ENCODE measurements at regions of chr17 and their contacts with region 1.

Region 1: GRCh38 chr17:16380640-16381495 is at the start of gene UBB:
- DNase-seq: peak; percentile 97
- ATAC-seq: peak; percentile 95
- H3K4me3 Mint-ChIP-seq: peak within 1 kb of the TSS; percentile 94
- H3K27ac Mint-ChIP-seq: peak within 1 kb of the TSS; percentile 95
- H3K4me1 Mint-ChIP-seq: peaks cover 33% of the 10 kb centered on the region
- H3K27me3 Mint-ChIP-seq: no peaks in the 10 kb centered on the region
- CTCF ChIP-seq: no peak
- total RNA-seq, gene UBB: 1,334 to 1,337 TPM

Region 2: GRCh38 chr17:16135461-16135860 is 245.4 kb before region 1 on chr17:
- CTCF ChIA-PET with region 1: no interaction called
- POLR2A ChIA-PET with region 1: no interaction called
- intact Hi-C with region 1: no loop called
- DNase-seq: no peak
- ATAC-seq: no peak
- H3K4me3 Mint-ChIP-seq: no peak overlapping the region
- H3K27ac Mint-ChIP-seq: no peak overlapping the region
- H3K4me1 Mint-ChIP-seq: peaks cover 3% of the 10 kb centered on the region
- H3K27me3 Mint-ChIP-seq: no peaks in the 10 kb centered on the region
- CTCF ChIP-seq: no peak

Region 3: DNA sequence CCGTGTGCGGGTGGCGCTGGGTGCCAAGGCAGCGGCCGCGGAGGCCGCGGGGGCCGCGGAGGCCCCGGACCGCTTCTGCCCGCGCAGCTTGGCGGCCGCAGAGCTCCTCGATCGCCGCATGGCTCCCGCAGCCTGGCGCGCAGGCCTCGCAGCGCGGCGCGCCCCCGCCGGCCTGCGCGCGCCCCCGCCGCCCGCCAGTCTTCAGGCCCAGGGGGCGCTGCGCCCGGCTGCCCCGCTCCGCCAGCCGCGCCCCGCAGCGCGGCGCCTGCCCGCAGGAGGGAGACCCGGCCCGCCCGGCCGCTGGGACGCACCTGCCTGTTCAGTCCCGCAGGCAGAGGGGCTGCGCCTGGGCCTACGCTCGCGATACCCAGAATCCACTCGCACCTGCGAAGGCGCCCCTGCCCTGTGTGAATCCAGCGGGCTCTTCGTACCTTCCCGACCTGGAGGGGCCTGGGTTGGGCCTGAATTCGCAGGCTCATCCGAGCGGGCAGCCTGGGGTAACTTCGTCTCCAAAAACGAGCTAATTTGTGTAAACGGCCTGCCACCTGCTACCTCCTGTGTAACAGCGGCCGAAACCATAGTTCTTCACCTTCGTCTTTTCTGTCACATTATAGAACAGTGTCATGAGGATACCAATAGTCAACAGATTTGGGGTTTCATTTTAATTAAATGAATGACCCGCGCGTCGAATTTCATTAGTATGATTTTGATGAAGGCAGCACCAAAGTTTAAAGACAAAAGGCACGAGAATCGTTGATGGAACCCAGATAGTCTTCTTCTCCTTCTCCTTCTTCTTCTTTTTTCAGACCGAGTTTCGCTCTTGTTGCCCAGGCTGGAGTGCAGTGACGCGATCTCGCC is 27.3 kb before region 1 on chr17 and contains the start of gene CENPV:
- CTCF ChIA-PET with region 1: interaction called, 3 read pairs
- POLR2A ChIA-PET with region 1: interaction called, 16 read pairs
- intact Hi-C with region 1: no loop called
- DNase-seq: peak; percentile 66
- ATAC-seq: peak; percentile 82
- H3K4me3 Mint-ChIP-seq: peak within 1 kb of the TSS; percentile 97
- H3K27ac Mint-ChIP-seq: peak within 1 kb of the TSS; percentile 93
- H3K4me1 Mint-ChIP-seq: peaks cover 18% of the 10 kb centered on the region
- H3K27me3 Mint-ChIP-seq: no peaks in the 10 kb centered on the region
- CTCF ChIP-seq: peak; percentile 9
- total RNA-seq, gene CENPV: 139 to 142 TPM

Measured in activated CD8-positive, alpha-beta T cell treated with anti-CD3 and anti-CD28 coated beads for 36 hours (primary cell).